ENCODE measurements at regions of chr15 and their contacts with region 1.

Region 1: DNA sequence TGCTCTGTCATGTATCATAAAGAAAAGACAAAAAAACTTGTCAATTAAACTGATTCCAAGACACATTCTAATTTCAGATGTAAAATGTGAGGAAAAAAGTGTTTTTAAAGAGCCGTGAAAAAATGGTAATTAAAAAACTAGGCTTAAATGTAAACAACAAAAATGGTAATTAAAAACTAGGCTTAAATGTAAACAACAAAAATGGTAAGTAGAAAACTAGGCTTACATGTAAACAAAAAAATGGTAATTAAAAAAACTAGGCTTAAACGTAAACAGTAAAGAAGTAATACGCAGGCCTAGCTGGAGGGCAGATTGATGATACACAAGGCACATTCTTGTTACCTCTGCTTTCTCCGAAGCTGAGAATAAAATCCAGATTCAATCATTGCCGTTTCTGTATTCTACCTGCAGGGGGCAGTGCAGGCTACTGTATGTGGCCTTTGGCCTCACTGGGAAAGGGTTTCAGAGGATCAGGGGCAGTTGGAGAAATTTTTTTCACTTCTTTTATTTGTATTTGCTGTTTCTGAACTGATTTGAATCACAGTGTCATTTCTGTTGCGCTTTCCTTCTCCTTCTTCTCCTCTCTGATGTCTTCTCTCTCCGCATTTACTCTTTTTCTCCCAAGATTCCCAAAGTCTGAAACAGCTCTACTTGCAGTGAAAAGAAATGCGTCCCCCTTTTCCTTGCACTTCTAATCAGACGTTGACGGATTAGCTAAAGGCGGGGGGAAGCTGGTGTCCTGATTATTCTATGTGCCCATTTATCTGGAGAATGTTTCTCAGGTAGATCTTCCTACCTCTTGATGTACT is 67.2 kb upstream of the MCTP2 start:
- DNase-seq: peak; percentile 40
- CTCF ChIP-seq: peak; percentile 79

Region 2: GRCh38 chr15:94317201-94317600 is 153.0 kb after region 1 on chr15:
- in situ Hi-C with region 1: loop called (anchors 10 kb)
- DNase-seq: no peak
- CTCF ChIP-seq: no peak

Region 3: GRCh38 chr15:94370206-94370935 is 206.2 kb after region 1 on chr15:
- in situ Hi-C with region 1: no loop called
- DNase-seq: no peak
- CTCF ChIP-seq: no peak

Region 4: DNA sequence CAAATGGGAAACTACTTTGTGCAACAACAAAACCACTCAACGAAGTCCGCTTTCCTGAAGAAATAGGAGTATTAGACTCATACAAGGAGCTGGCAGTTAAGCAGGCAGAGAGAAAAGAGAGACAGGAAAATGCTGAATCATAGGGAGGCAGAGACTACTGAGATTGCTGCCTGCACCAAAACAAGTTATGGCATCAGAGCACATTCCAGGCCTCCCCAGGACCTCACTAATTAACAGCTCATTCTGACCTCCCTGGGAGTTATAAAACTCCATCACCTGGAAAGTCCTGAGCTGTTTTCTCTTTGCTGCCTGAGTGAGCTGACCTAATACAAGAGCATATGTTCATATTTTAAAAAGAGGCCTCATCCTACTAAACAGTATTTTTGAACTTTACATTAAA is 808.1 kb after region 1 on chr15:
- in situ Hi-C with region 1: no loop called
- DNase-seq: no peak
- CTCF ChIP-seq: no peak